ENCODE measurements at regions of chr10 and their contacts with region 1.

Region 1: GRCh38 chr10:25113191-25114035 is 61.4 kb upstream of the GPR158 start:
- DNase-seq: peak; percentile 61
- H3K4me3 Mint-ChIP-seq: no peak overlapping the region
- H3K27ac Mint-ChIP-seq: no peak overlapping the region
- H3K4me1 Mint-ChIP-seq: no peaks in the 10 kb centered on the region
- H3K27me3 Mint-ChIP-seq: peaks cover 32% of the 10 kb centered on the region

Region 2: GRCh38 chr10:25080880-25081581 is 32.4 kb before region 1 on chr10:
- CTCF ChIA-PET with region 1: no interaction called
- intact Hi-C with region 1: no loop called
- DNase-seq: peak; percentile 77
- H3K4me3 Mint-ChIP-seq: no peak overlapping the region
- H3K27ac Mint-ChIP-seq: no peak overlapping the region
- H3K4me1 Mint-ChIP-seq: peaks cover 3% of the 10 kb centered on the region
- H3K27me3 Mint-ChIP-seq: peaks cover 8% of the 10 kb centered on the region

Region 3: GRCh38 chr10:25226775-25227682 is 113.6 kb after region 1 on chr10:
- CTCF ChIA-PET with region 1: no interaction called
- intact Hi-C with region 1: loop called (anchors 1 kb)
- DNase-seq: peak; percentile 35
- H3K4me3 Mint-ChIP-seq: no peak overlapping the region
- H3K27ac Mint-ChIP-seq: no peak overlapping the region
- H3K4me1 Mint-ChIP-seq: no peaks in the 10 kb centered on the region
- H3K27me3 Mint-ChIP-seq: no peaks in the 10 kb centered on the region

Measured in activated naive CD4-positive, alpha-beta T cell treated with anti-CD3 and anti-CD28 coated beads for 36 hours (primary cell).